Posterior cingulate gyrus (tissue), 11 donors: ENCODE measurements at regions of chr15 and their contacts with region 1.

Region 1: GRCh38 chr15:38129531-38130204 is 123.0 kb upstream of the SPRED1 start:
- DNase-seq: peak in 7 of 10 donors; percentile 43 to 89 (median 61)

Region 2: GRCh38 chr15:37038716-37039106 is 1091.0 kb before region 1 on chr15:
- intact Hi-C with region 1: no loop called
- DNase-seq: no peak

Region 3: DNA sequence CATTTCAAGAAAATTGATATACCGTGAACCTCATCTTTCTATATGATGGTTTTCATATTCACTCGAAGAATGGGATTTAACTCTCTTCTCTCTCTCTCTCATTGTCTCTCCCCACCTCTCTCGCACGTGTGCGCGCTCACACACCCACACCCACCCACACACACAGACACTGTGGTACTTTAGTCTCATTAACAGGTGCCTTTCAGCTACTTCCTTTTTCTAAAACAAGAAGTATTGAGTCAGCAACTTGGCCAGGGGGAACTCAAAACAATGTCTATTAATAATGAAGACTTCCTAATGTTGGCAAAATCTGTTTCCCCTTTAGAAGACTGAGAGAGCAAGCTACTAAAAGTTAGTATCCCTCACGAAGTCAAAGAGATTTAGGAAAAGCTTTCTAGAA is 44.6 kb before region 1 on chr15:
- intact Hi-C with region 1: loop called (anchors 5 kb)
- DNase-seq: no peak

Region 4: DNA sequence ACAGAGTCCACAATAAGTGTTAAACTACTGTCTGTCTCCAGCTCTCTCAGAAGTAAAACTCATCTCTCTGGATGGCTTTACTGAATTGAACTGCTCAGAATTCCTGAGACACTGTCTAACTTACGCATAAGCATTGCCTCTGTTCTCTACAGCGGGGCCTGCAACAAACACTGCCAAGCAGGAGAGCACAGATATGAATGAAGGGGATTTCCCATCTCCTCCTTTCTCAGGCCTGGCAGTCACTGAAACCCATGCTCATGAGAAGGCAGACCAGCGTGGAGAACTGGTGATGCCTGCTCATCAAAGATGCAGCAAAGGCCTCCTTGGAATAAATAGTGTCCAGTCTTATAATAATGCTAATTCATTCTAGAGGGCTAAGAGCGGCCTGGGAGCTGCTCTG is 424.7 kb after region 1 on chr15:
- intact Hi-C with region 1: no loop called
- DNase-seq: no peak